A549 (cell line): ENCODE measurements at regions of chr7 and their contacts with region 1.

Region 1: DNA sequence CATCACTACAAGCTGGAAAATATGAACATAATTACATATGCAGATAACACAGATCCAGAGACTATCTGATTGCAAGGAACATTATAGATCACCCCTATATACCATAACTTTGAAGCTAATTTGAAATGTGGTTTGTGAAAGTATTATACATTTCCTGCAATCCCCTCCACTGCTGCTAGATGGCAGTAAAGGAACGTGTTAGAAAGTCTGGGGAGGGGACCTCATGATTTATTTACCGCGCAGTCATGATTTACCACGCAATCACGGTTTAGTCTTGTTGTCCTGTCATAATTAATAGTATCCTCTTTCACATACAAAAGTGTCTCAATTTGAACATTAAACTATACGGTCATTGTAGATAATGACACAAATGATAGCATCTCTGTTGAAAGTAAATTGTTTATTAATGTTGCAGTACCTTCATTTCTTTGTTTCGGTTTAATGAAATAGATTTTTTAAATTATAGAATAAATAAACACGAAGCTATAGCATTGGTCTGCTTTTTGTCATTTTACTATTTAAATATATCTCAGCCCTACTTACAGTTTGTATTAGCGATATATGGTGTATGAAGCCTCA is 145.3 kb upstream of the PRSS1 start:
- DNase-seq: peak; percentile 57 to 66
- ATAC-seq: peak; percentile 43 to 65; a peak in 5 of 6 replicates
- H3K4me3 ChIP-seq: no peak overlapping the region; the same call in 2 of the 3 replicates
- H3K27ac ChIP-seq: no peak overlapping the region
- H3K4me1 ChIP-seq: no peaks in the 10 kb centered on the region
- CTCF ChIP-seq: peak; percentile 86
- EP300 ChIP-seq: no peak
- POLR2A ChIP-seq: no peak
- RAD21 ChIP-seq: peak; percentile 79 to 80

Region 2: DNA sequence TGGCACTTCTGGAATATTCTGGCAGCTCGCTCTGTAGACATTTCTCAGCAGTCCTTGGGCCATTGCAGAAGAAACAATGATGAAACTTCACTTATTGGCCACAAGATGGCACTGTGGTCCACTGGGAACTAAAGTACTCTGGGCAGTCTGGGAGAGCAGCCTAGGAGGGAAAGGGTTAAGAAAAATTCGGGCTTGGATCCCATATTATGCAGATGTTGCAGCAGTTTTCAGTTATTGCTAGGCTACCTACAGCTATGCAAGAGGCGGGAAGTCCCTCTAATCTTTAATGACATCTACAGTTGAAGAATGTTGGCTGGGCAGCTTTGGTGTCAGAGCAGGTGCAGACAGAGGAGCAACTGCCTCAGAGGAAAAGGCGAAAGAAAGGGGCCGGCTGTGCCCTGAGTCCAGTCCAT is 144.4 kb before region 1 on chr7:
- CTCF ChIA-PET with region 1: no interaction called
- POLR2A ChIA-PET with region 1: no interaction called
- DNase-seq: peak; percentile 30 to 61
- ATAC-seq: peak; percentile 80 to 96; a peak in 5 of 6 replicates
- H3K4me3 ChIP-seq: no peak overlapping the region
- H3K27ac ChIP-seq: no peak overlapping the region
- H3K4me1 ChIP-seq: no peaks in the 10 kb centered on the region
- CTCF ChIP-seq: peak; percentile 69
- EP300 ChIP-seq: no peak
- POLR2A ChIP-seq: no peak
- RAD21 ChIP-seq: peak; percentile 38 to 41

Region 3: GRCh38 chr7:142632291-142633134 is 28.6 kb after region 1 on chr7:
- CTCF ChIA-PET with region 1: interaction called, 15 read pairs
- POLR2A ChIA-PET with region 1: no interaction called
- DNase-seq: peak; percentile 65 to 71
- ATAC-seq: peak; percentile 89 to 97
- H3K4me3 ChIP-seq: no peak overlapping the region
- H3K27ac ChIP-seq: no peak overlapping the region
- H3K4me1 ChIP-seq: no peaks in the 10 kb centered on the region
- CTCF ChIP-seq: peak; percentile 81
- EP300 ChIP-seq: no peak
- POLR2A ChIP-seq: no peak
- RAD21 ChIP-seq: peak; percentile 70 to 77

Region 4: GRCh38 chr7:142788303-142789289 is 184.6 kb after region 1 on chr7:
- CTCF ChIA-PET with region 1: interaction called, 28 read pairs
- POLR2A ChIA-PET with region 1: no interaction called
- DNase-seq: no peak
- ATAC-seq: no peak
- H3K4me3 ChIP-seq: no peak overlapping the region
- H3K27ac ChIP-seq: no peak overlapping the region
- H3K4me1 ChIP-seq: no peaks in the 10 kb centered on the region
- CTCF ChIP-seq: no peak
- EP300 ChIP-seq: no peak
- POLR2A ChIP-seq: no peak
- RAD21 ChIP-seq: no peak